ENCODE measurements at regions of chr5 and their contacts with region 1.

Region 1: GRCh38 chr5:128083033-128083810 is at the start of gene SLC12A2:
- DNase-seq: peak; percentile 94 to 98 (median 97)
- H3K4me3 ChIP-seq: peak within 1 kb of the TSS; percentile 68 to 89
- H3K4me3 Mint-ChIP-seq: peak within 1 kb of the TSS; percentile 89 to 98 (median 94)
- H3K27ac ChIP-seq: peak within 1 kb of the TSS; percentile 88
- H3K27ac Mint-ChIP-seq: peak within 1 kb of the TSS; percentile 87 to 98 (median 97)
- H3K4me1 ChIP-seq: peaks cover 62% of the 10 kb centered on the region
- H3K4me1 Mint-ChIP-seq: peaks cover 51 to 76% (median 61%) of the 10 kb centered on the region in 4 donors
- H3K27me3 ChIP-seq: no peaks in the 10 kb centered on the region
- H3K27me3 Mint-ChIP-seq: no peaks in the 10 kb centered on the region
- total RNA-seq, gene SLC12A2: 13.3 to 13.6 TPM

Region 2: DNA sequence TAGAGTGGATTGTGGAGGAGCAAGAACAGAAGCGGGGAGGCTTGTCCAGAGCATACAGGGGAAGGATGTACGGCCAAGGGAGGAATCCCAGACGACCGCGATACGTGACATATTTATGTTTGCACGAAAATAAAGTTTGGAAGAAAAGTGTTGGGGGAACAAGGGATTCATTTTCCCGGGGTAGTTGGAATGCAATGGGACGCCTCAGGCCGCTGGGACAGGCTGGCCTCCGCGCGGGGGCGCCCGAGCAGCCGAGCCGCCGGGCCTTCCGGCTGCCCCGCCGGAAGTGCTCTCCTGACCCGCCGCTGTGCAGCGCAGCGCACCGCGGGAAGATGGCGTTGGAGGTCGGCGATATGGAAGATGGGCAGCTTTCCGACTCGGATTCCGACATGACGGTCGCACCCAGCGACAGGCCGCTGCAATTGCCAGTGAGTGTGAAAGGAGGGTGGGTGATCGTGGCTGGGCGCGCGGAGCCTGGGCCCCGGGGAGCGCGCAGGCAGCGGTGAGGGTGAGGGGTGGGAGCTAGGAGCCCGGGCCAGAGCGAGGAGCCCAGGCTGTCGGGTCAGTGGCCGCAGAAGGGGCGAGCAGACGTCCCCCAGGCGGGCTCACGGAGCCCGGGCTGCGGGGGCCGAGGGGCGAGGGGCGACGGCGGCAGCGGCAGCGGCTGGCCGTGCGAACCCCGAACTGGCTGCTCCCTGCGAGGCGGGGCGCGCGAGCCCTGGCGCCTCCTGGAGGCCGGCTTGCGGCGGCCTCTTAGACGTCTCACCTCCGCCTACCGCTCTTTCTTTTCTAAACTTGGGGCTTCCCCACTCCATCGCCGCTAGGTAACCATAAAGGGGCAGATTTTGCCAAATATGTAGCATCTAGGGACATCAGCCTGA is 1482.4 kb before region 1 on chr5 and contains the start of gene PHAX:
- CTCF ChIA-PET with region 1: no interaction called
- POLR2A ChIA-PET with region 1: interaction called, 3 read pairs
- intact Hi-C with region 1: loop called (anchors 5 kb)
- DNase-seq: peak; percentile 68 to 75 (median 74)
- H3K4me3 ChIP-seq: peak within 1 kb of the TSS; percentile 50 to 95
- H3K4me3 Mint-ChIP-seq: peak within 1 kb of the TSS; percentile 96 to 99 (median 97)
- H3K27ac ChIP-seq: peak within 1 kb of the TSS; percentile 80
- H3K27ac Mint-ChIP-seq: peak within 1 kb of the TSS; percentile 84 to 99 (median 96)
- H3K4me1 ChIP-seq: peaks cover 31% of the 10 kb centered on the region
- H3K4me1 Mint-ChIP-seq: peaks cover 22 to 46% (median 34%) of the 10 kb centered on the region in 4 donors
- H3K27me3 ChIP-seq: no peaks in the 10 kb centered on the region
- H3K27me3 Mint-ChIP-seq: no peaks in the 10 kb centered on the region
- total RNA-seq, gene PHAX: 41.2 to 43.4 TPM

Region 3: DNA sequence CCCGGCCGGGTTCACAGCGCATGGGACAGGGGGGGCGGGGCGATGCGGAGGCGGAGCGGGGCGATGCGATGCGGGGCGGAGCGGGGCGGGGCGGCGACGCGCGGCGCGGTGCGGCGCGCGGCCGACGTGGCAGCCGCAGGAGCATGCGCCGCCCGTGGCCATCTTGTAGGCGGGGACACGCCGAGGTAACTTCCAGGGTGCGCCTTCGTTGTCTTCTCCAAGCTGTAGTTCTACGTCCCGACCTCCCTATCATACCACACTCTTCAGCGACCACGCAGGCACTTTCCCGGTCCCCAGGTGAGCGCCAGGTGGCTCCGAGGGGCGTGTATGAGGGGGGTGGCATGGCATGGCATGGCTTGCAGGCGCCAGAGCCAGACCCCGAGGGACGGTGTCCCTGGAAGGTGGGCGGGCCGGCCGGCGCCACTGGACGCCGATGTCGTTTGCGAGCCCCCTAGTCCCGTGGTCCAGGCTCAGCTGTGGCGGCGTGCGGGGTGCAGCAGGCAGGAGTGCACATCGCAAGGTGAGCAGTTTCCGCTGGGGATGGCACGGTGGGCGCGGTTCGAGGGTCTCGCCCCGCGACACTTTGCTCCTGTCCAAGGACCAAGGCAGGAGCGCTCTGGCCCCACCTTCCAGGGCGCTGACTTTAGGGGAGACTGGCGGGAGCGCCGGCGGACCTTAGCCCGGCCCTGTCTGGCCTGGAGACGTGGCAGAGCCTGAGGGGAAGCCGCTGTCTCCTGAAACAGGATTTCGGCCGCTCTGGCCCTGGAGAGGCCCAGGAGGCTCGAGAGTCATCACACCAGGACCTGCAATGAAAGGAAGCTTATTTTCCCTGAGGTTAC is 565.5 kb before region 1 on chr5 and contains the start of gene PRRC1:
- CTCF ChIA-PET with region 1: no interaction called
- POLR2A ChIA-PET with region 1: interaction called, 3 read pairs
- intact Hi-C with region 1: loop called (anchors 2 kb)
- DNase-seq: peak; percentile 74 to 83 (median 76)
- H3K4me3 ChIP-seq: peak within 1 kb of the TSS; percentile 79 to 97
- H3K4me3 Mint-ChIP-seq: peak within 1 kb of the TSS; percentile 87 to 93 (median 90)
- H3K27ac ChIP-seq: peak within 1 kb of the TSS; percentile 87
- H3K27ac Mint-ChIP-seq: peak within 1 kb of the TSS; percentile 70 to 93 (median 88)
- H3K4me1 ChIP-seq: peaks cover 25% of the 10 kb centered on the region
- H3K4me1 Mint-ChIP-seq: peaks cover 26 to 45% (median 34%) of the 10 kb centered on the region in 4 donors
- H3K27me3 ChIP-seq: peaks cover under 1% of the 10 kb centered on the region
- H3K27me3 Mint-ChIP-seq: peaks cover 4% of the 10 kb centered on the region in 2 donors
- total RNA-seq, gene PRRC1: 57.0 to 59.9 TPM

Region 4: DNA sequence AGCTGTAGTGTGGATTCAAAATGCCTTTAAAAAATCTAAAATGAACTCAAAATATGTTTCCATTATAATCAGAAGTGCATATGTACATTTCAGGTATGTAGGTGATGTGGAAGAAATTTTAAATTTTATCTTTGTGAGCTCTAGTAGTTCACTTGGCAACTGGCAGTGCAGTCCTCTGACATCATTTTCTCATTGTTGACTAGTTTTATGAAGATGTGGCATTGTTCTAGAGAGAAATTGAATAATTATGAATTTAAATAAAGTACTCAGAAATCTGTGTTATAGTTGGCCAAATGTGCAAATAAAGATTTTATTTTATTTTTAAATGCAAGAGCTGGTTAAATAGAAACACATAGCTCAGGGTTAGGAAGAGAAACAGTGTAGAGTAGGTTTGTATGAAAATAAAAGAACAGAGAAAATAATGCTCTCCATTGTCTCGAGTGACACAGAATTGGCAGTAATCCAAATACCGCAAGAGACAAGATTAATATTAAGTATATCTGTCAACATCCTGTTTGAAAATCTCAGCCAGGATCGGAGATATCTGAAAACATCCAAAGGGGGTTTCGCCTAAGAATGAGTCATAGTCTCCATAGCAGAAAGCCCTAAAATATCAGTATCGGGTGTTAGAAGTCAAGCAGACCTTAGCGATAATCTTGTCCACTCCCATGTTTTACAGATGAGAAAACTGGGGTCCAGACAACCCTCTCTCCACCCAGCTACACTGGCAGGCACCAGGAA is 190.6 kb before region 1 on chr5:
- CTCF ChIA-PET with region 1: interaction called, 3 read pairs
- POLR2A ChIA-PET with region 1: interaction called, 6 read pairs
- intact Hi-C with region 1: loop called (anchors 1 kb)
- DNase-seq: peak; percentile 28 to 60 (median 51)
- H3K4me3 ChIP-seq: no peak overlapping the region
- H3K4me3 Mint-ChIP-seq: peak overlapping the region; percentile 10 to 68 (median 38)
- H3K27ac ChIP-seq: peak overlapping the region; percentile 6
- H3K27ac Mint-ChIP-seq: peak overlapping the region in 6 of 7 donors; percentile 28 to 83 (median 69)
- H3K4me1 ChIP-seq: peaks cover 13% of the 10 kb centered on the region
- H3K4me1 Mint-ChIP-seq: peaks cover 9 to 21% (median 17%) of the 10 kb centered on the region in 4 donors
- H3K27me3 ChIP-seq: no peaks in the 10 kb centered on the region
- H3K27me3 Mint-ChIP-seq: peaks cover 0 to 2% of the 10 kb centered on the region in 2 donors

Region 5: DNA sequence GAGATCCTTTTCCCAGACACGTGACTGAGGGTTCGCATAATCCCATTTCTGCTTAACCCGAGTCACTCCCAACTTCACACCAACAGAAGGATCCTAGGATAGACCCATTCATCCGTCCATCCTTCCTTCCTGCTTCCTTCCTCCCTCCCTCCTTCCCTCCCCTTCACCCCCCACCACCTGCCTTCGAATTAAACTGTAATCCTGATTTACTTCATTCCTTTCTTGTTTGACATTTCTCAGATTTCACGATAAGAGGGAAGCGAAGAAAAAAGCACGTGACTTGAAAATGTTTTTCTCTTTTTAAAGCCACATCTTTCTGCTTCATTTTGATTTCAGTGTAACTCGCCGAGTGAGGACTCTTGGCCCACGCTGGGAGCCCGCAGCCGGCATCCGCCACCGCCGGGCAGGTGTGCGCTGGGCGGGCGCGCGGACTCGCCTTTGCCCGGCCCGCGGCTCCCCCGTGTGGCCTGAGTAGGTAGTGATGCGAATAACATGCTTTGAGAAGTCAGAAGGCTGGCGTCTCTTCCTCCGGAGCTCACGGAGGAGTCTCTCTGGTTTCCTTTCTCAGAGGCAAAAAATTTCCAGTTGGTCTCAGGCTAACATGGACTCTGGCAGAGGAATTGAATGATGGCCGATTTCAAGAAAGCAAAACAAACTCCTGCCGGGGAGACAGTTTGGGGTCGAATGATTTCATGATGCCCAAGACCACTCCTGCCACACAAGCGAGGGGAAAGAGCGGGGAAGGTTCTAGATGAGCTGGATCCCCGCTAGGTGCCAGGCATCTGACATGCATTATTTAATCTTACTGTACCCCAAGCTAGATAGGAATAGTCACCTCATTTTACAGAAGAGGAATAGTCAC is 118.1 kb after region 1 on chr5:
- CTCF ChIA-PET with region 1: interaction called, 5 read pairs
- POLR2A ChIA-PET with region 1: no interaction called
- intact Hi-C with region 1: loop called (anchors 1 kb)
- DNase-seq: peak; percentile 73 to 79 (median 74)
- H3K4me3 ChIP-seq: no peak overlapping the region
- H3K4me3 Mint-ChIP-seq: peak overlapping the region in 7 of 8 donors; percentile 28 to 74 (median 51)
- H3K27ac ChIP-seq: no peak overlapping the region
- H3K27ac Mint-ChIP-seq: peak overlapping the region in 2 of 7 donors; percentile 32 to 43
- H3K4me1 ChIP-seq: peaks cover 29% of the 10 kb centered on the region
- H3K4me1 Mint-ChIP-seq: peaks cover 26 to 33% (median 28%) of the 10 kb centered on the region in 4 donors
- H3K27me3 ChIP-seq: no peaks in the 10 kb centered on the region
- H3K27me3 Mint-ChIP-seq: peaks cover 2 to 4% of the 10 kb centered on the region in 2 donors

Measured in CD4-positive, alpha-beta memory T cell (primary cell).